ENCODE measurements at regions of chr16 and their contacts with region 1.

Region 1: GRCh38 chr16:27843800-27844199 is 219.7 kb downstream of the GSG1L start:
- DNase-seq: no peak
- ATAC-seq: no peak
- H3K4me3 ChIP-seq: no peak overlapping the region
- H3K27ac ChIP-seq: no peak overlapping the region
- H3K4me1 ChIP-seq: no peaks in the 10 kb centered on the region
- H3K27me3 ChIP-seq: peaks cover 2% of the 10 kb centered on the region
- CTCF ChIP-seq: no peak

Region 2: GRCh38 chr16:27828671-27829070 is 15.1 kb before region 1 on chr16:
- CTCF ChIA-PET with region 1: no interaction called
- POLR2A ChIA-PET with region 1: no interaction called
- in situ Hi-C with region 1: no loop called
- intact Hi-C with region 1: no loop called
- DNase-seq: no peak
- ATAC-seq: no peak
- H3K4me3 ChIP-seq: no peak overlapping the region
- H3K27ac ChIP-seq: no peak overlapping the region
- H3K4me1 ChIP-seq: no peaks in the 10 kb centered on the region
- H3K27me3 ChIP-seq: peaks cover 6% of the 10 kb centered on the region
- CTCF ChIP-seq: no peak

Region 3: GRCh38 chr16:28081391-28081968 is 237.7 kb after region 1 on chr16:
- CTCF ChIA-PET with region 1: interaction called, 12 read pairs
- POLR2A ChIA-PET with region 1: no interaction called
- in situ Hi-C with region 1: no loop called
- intact Hi-C with region 1: no loop called
- DNase-seq: no peak
- ATAC-seq: no peak
- H3K4me3 ChIP-seq: no peak overlapping the region
- H3K27ac ChIP-seq: no peak overlapping the region
- H3K4me1 ChIP-seq: no peaks in the 10 kb centered on the region
- H3K27me3 ChIP-seq: no peaks in the 10 kb centered on the region
- CTCF ChIP-seq: no peak

Measured in Panc1 (cell line).